SK-N-SH (cell line): ENCODE measurements at regions of chr9 and their contacts with region 1.

Region 1: DNA sequence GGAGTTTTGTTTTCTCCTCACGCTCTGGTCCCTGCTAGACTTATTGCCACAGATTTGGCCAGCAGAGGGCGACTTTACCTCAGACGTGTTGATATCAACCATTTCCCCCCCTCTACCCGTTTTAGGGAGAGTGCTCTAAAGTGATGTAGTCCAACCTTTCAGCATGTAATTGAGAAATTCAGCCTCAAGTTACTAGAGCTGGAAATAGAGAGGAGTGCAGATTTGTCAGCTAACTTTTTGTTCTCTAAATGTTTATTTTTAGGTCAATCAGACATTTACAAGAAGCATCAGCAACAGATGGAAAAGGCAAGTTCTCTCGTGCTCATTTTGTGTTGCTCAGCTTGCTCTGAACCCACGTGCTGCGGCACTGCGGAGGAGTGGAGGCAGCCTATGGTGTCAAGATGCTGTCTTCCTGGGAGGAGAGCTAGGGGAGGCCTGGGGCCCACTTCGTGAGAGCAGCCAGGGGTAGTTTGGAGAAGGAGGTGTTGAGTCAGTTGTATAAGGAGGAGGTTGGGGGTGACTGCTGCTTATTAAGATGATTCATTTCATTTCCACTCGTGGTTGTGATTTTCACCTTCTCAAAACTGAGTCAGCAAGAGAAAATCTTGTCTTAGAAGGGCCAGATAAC is 53.6 kb downstream of the GPR107 start:
- DNase-seq: peak; percentile 80
- H3K4me3 ChIP-seq: no peak overlapping the region; a peak in 1 of 4 replicates
- H3K27ac ChIP-seq: peak overlapping the region in 1 of 2 experiments; percentile 16; a peak in 1 of 4 replicates
- H3K4me1 ChIP-seq: peaks cover 0 to 18% of the 10 kb centered on the region in 2 experiments; a peak in 1 of 4 replicates
- H3K27me3 ChIP-seq: no peaks in the 10 kb centered on the region
- CTCF ChIP-seq: peak; percentile 90
- EP300 ChIP-seq: no peak
- RAD21 ChIP-seq: peak; percentile 95

Region 2: DNA sequence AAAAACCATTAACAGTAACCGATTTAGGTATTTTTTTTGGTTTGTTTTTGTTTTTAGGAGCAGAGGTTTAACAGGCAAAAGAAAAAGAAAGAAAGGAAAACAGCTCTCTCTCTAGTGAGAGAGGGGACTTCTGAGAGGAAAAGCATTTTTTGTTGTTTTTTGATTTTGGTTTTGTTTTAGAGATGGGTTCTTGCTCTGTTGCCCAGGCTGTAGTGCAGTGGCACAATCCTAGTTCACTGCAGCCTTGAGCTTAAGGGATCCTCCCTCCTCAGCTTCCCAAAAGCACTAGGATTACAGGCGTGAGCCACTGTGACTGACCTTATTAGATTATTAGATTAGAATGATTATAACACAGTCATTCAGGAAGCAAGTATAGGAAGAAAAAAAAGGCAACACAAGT is 262.0 kb before region 1 on chr9:
- CTCF ChIA-PET with region 1: interaction called, 10 read pairs
- POLR2A ChIA-PET with region 1: no interaction called
- DNase-seq: no peak
- H3K4me3 ChIP-seq: no peak overlapping the region
- H3K27ac ChIP-seq: no peak overlapping the region
- H3K4me1 ChIP-seq: peaks cover 0 to 20% of the 10 kb centered on the region in 2 experiments; a peak in 1 of 4 replicates
- H3K27me3 ChIP-seq: no peaks in the 10 kb centered on the region
- CTCF ChIP-seq: no peak
- EP300 ChIP-seq: no peak
- RAD21 ChIP-seq: no peak

Region 3: GRCh38 chr9:130143958-130144366 is 36.6 kb after region 1 on chr9:
- CTCF ChIA-PET with region 1: interaction called, 18 read pairs
- POLR2A ChIA-PET with region 1: no interaction called
- DNase-seq: no peak
- H3K4me3 ChIP-seq: no peak overlapping the region
- H3K27ac ChIP-seq: peak overlapping the region in 1 of 2 experiments; percentile 35; a peak in 1 of 4 replicates
- H3K4me1 ChIP-seq: peaks cover 8 to 22% of the 10 kb centered on the region in 2 experiments; a peak in 3 of 4 replicates
- H3K27me3 ChIP-seq: no peaks in the 10 kb centered on the region
- CTCF ChIP-seq: no peak
- EP300 ChIP-seq: no peak
- RAD21 ChIP-seq: no peak

Region 4: GRCh38 chr9:130220352-130220751 is 113.0 kb after region 1 on chr9:
- CTCF ChIA-PET with region 1: interaction called, 23 read pairs
- POLR2A ChIA-PET with region 1: no interaction called
- DNase-seq: peak; percentile 89
- H3K4me3 ChIP-seq: no peak overlapping the region
- H3K27ac ChIP-seq: peak overlapping the region in 1 of 2 experiments; percentile 90; a peak in 2 of 4 replicates
- H3K4me1 ChIP-seq: peaks cover 0 to 22% of the 10 kb centered on the region in 2 experiments; a peak in 1 of 4 replicates
- H3K27me3 ChIP-seq: no peaks in the 10 kb centered on the region
- CTCF ChIP-seq: no peak
- EP300 ChIP-seq: no peak
- RAD21 ChIP-seq: peak; percentile 38

Region 5: DNA sequence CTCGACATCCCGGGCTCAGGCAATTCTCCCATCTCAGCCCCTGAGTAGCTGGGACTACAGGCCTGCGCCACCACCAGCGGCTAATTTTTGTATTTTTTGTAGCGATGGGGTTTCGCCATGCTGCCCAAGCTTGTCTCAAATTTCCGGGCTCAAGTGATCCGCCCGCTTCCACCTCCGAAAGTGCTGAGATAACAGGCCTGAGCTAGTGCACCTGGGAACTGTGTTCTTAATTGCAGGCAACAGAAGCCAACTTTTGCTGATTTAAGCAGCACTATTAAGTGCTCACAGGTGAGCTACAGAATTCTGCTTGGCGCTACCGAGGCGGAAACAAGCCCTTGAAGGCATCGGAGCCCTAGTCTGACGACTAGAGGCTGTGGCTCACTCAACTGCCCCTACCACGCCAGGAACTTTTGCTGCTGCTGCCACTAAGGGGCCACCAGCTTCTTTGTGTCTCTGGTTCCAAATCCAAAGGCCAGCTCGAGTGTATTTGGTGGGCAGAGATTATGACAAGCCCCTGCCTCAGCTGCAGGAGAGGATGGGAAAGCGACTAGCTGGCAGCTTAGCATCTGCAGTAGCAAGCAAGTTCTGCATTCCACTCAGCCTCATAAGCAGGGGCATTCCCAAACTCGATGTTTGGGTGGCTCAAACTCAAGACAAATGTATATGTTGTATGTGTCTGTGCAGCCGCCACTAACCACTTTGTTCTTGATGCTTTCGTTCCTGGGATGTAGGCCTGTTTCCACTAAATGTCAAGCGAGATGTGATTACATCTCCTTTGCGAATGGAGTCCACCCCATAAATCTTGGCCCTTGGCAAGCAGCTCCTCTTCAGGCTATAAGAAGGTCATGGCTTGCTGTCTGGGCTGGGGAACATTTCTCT is 147.6 kb after region 1 on chr9:
- CTCF ChIA-PET with region 1: interaction called, 11 read pairs
- POLR2A ChIA-PET with region 1: no interaction called
- DNase-seq: no peak
- H3K4me3 ChIP-seq: no peak overlapping the region
- H3K27ac ChIP-seq: no peak overlapping the region
- H3K4me1 ChIP-seq: peaks cover 0 to 6% of the 10 kb centered on the region in 2 experiments; a peak in 1 of 4 replicates
- H3K27me3 ChIP-seq: no peaks in the 10 kb centered on the region; the same call in 1 of the 2 replicates
- CTCF ChIP-seq: no peak
- EP300 ChIP-seq: no peak
- RAD21 ChIP-seq: no peak

Region 6: GRCh38 chr9:130343445-130343918 is 236.1 kb after region 1 on chr9:
- CTCF ChIA-PET with region 1: interaction called, 30 read pairs
- POLR2A ChIA-PET with region 1: no interaction called
- DNase-seq: peak; percentile 88
- H3K4me3 ChIP-seq: peak overlapping the region in 1 of 2 experiments; percentile 35; a peak in 1 of 4 replicates
- H3K27ac ChIP-seq: no peak overlapping the region
- H3K4me1 ChIP-seq: peaks cover 0 to 6% of the 10 kb centered on the region in 2 experiments; a peak in 1 of 4 replicates
- H3K27me3 ChIP-seq: no peaks in the 10 kb centered on the region
- CTCF ChIP-seq: peak; percentile 89
- EP300 ChIP-seq: no peak
- RAD21 ChIP-seq: peak; percentile 83